ENCODE measurements at regions of chr15 and their contacts with region 1.

Region 1: DNA sequence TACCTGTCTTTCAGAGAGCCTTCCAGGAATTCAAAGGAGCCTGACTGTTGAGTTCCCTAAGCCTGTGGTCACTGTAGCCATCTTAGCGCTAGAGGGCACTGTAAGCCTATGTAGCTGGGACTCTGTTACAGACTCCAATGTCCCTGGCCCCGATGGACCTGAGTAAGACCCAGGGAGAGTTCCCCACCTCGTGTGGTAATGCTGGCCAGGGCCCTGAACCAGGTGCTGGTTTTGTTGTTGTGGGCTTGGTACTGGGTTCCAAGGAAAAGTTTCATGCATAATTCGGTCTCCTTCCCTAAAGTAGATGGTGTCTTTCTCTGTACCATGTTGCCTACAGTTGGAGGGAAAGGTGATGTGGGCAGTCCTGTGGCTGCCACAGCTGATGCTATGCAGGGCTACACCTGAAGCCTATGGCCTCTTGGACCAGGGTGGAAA is 32.4 kb downstream of the CDAN1 start:
- DNase-seq: peak; percentile 33 to 81 (median 48)
- ATAC-seq: peak; percentile 89
- H3K4me3 ChIP-seq: no peak overlapping the region
- H3K4me3 Mint-ChIP-seq: no peak overlapping the region
- H3K27ac ChIP-seq: no peak overlapping the region
- H3K27ac Mint-ChIP-seq: no peak overlapping the region
- H3K4me1 ChIP-seq: no peaks in the 10 kb centered on the region
- H3K4me1 Mint-ChIP-seq: no peaks in the 10 kb centered on the region
- H3K27me3 ChIP-seq: no peaks in the 10 kb centered on the region
- H3K27me3 Mint-ChIP-seq: no peaks in the 10 kb centered on the region
- CTCF ChIP-seq: peak; percentile 80

Region 2: DNA sequence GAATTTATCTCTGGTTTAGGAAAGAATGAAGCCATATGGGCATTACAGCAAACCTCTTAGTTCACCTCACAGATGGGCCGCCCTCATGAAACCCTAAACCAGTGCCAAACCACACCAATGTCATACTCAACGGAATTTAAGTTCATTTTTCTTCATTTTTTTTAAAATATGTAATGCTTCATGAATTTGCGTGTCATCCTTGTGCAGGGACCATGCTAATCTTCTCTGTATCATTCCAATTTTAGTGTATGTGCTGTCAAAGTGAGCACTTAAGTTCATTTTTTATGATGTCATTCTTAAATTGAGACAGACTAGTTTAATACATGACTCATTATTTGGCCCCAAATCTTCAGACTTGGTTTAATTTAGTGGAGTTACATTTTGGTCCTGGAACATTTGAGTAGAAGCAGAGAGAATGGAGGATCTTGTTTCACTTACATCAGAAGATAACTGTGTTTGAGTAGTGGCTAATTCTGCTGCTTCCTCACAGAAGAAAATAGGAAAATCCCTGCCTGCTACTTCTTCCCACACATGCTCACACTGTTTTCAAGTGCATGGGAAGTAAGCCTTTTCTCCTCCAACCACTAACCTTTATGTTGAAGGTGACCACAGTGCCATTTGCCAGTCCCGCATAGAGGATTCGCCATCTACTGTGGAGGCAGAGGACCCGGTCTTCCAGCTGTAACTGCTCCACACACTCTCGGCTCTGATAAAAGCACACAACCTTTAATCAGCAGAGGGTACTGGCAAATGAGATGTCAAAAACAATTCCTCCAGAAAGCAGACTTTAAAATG is 276.9 kb before region 1 on chr15:
- CTCF ChIA-PET with region 1: no interaction called
- POLR2A ChIA-PET with region 1: no interaction called
- intact Hi-C with region 1: no loop called
- DNase-seq: no peak
- ATAC-seq: no peak
- H3K4me3 ChIP-seq: no peak overlapping the region
- H3K4me3 Mint-ChIP-seq: no peak overlapping the region
- H3K27ac ChIP-seq: no peak overlapping the region
- H3K27ac Mint-ChIP-seq: no peak overlapping the region
- H3K4me1 ChIP-seq: no peaks in the 10 kb centered on the region
- H3K4me1 Mint-ChIP-seq: no peaks in the 10 kb centered on the region
- H3K27me3 ChIP-seq: no peaks in the 10 kb centered on the region
- H3K27me3 Mint-ChIP-seq: no peaks in the 10 kb centered on the region
- CTCF ChIP-seq: no peak

Region 3: DNA sequence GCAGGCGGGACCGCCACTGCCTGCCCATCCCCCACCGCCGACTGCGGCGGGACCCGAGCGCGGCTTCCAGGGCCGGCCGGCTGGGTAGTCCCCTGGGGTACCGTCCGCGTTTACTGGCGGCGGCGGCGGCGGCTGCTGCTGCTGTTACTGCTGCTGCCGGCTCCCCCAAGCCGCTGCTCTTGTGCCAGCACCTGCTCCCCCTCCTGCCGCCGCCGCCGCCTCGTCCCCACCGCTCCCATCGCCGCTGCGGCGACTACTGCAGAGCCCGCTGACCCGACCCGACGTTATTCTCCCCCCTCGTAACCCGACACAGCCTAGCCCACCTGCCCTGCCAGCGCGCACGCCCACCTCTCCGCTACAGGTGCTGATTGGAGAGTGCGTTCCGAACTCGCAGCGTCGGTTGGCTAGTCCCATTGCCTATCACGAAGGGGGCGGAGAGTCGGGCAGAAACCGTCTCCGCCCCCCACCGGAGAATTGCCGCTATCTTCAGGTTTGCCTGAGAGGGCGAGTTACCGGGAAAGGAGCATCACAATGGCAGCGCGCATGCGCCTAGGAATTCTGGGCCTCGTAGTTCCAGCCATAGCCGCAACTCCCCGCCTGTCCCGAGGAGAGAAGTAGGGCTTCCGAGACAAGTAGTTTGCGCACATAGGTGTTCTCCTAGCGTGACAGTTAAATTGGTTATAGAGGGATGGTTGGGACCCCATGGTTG is 216.2 kb after region 1 on chr15 and contains the start of gene TTBK2:
- CTCF ChIA-PET with region 1: interaction called, 18 read pairs
- POLR2A ChIA-PET with region 1: interaction called, 3 read pairs
- intact Hi-C with region 1: no loop called
- DNase-seq: peak; percentile 94 to 99 (median 98)
- ATAC-seq: peak; percentile 96
- H3K4me3 ChIP-seq: peak within 1 kb of the TSS; percentile 75
- H3K4me3 Mint-ChIP-seq: peak within 1 kb of the TSS; percentile 99
- H3K27ac ChIP-seq: peak within 1 kb of the TSS; percentile 59 to 63
- H3K27ac Mint-ChIP-seq: peak within 1 kb of the TSS; percentile 89
- H3K4me1 ChIP-seq: peaks cover 15% of the 10 kb centered on the region
- H3K4me1 Mint-ChIP-seq: peaks cover 35% of the 10 kb centered on the region
- H3K27me3 ChIP-seq: no peaks in the 10 kb centered on the region
- H3K27me3 Mint-ChIP-seq: no peaks in the 10 kb centered on the region
- CTCF ChIP-seq: peak; percentile 26
- total RNA-seq, gene TTBK2: 17.5 to 20.1 TPM

Region 4: GRCh38 chr15:43204016-43204901 is 499.8 kb after region 1 on chr15:
- CTCF ChIA-PET with region 1: no interaction called
- POLR2A ChIA-PET with region 1: no interaction called
- intact Hi-C with region 1: loop called in 1 of 2 experiments (anchors 1 kb)
- DNase-seq: peak in 13 of 14 experiments; percentile 24 to 71 (median 37)
- ATAC-seq: peak; percentile 56
- H3K4me3 ChIP-seq: no peak overlapping the region
- H3K4me3 Mint-ChIP-seq: no peak overlapping the region
- H3K27ac ChIP-seq: no peak overlapping the region
- H3K27ac Mint-ChIP-seq: no peak overlapping the region
- H3K4me1 ChIP-seq: peaks cover 3% of the 10 kb centered on the region
- H3K4me1 Mint-ChIP-seq: peaks cover 6% of the 10 kb centered on the region
- H3K27me3 ChIP-seq: peaks cover 3 to 8% of the 10 kb centered on the region in 2 experiments
- H3K27me3 Mint-ChIP-seq: peaks cover 7% of the 10 kb centered on the region
- CTCF ChIP-seq: peak; percentile 58

Region 5: GRCh38 chr15:43285609-43286037 is 581.1 kb after region 1 on chr15:
- CTCF ChIA-PET with region 1: no interaction called
- POLR2A ChIA-PET with region 1: no interaction called
- intact Hi-C with region 1: loop called (anchors 1 to 2 kb)
- DNase-seq: peak in 13 of 14 experiments; percentile 24 to 80 (median 47)
- ATAC-seq: peak; percentile 77
- H3K4me3 ChIP-seq: no peak overlapping the region
- H3K4me3 Mint-ChIP-seq: no peak overlapping the region
- H3K27ac ChIP-seq: no peak overlapping the region
- H3K27ac Mint-ChIP-seq: no peak overlapping the region
- H3K4me1 ChIP-seq: no peaks in the 10 kb centered on the region
- H3K4me1 Mint-ChIP-seq: peaks cover 4% of the 10 kb centered on the region
- H3K27me3 ChIP-seq: no peaks in the 10 kb centered on the region
- H3K27me3 Mint-ChIP-seq: peaks cover 15% of the 10 kb centered on the region
- CTCF ChIP-seq: peak; percentile 74